CD4-positive, alpha-beta memory T cell (primary cell): ENCODE measurements at regions of chr11 and their contacts with region 1.

Region 1: GRCh38 chr11:64688534-64688982 is 34.4 kb downstream of the NRXN2 start:
- DNase-seq: peak; percentile 83 to 87 (median 86)
- H3K4me3 ChIP-seq: peak overlapping the region in 1 of 2 donors; percentile 26
- H3K4me3 Mint-ChIP-seq: peak overlapping the region; percentile 40 to 80 (median 54)
- H3K27ac ChIP-seq: no peak overlapping the region
- H3K27ac Mint-ChIP-seq: peak overlapping the region in 6 of 7 donors; percentile 49 to 85 (median 69)
- H3K4me1 ChIP-seq: peaks cover 11% of the 10 kb centered on the region
- H3K4me1 Mint-ChIP-seq: peaks cover 7 to 19% (median 13%) of the 10 kb centered on the region in 4 donors
- H3K27me3 ChIP-seq: peaks cover 4% of the 10 kb centered on the region
- H3K27me3 Mint-ChIP-seq: peaks cover 15 to 23% of the 10 kb centered on the region in 2 donors

Region 2: DNA sequence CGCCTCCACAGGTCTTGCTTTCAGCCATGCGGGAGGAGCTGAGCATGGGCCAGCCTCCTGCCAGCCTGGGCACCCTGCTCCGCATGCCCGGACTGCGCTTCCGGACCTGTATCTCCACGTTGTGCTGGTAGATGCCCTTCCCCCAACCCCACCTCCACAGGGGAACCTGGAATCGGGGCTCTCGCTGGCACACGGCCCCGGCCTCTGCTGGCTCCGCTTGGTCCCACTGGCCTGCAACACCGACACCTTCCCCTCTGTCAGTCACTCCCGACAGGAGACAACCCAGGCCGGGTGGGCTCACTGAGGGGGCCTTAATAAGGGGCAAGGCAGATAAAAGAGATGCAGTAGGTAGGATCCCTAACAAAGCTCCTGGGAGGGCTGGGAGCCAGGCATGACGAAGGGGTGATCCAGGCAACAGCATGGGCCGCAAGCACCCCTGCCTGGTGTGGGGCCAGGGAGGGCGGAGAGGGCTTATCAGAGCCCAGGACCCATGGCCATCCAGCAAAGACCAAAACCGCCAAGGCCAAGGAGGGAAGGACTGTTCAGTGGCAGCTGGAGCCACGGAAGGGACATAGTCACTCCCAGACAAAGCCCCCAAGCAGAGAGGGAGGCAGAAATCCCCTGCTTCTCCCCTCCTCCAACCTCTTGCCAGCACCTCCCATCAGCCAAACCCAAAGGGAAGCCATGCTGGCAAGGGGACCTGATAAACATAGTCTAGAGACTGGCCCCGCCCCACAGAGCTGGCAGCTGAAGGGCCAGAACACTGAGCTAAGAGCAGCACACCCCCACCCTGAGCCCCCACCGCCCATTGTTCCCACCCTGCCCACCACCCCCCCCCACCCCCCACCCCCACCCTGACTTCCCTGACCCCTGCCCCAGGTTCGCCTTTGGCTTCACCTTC is 89.5 kb before region 1 on chr11:
- CTCF ChIA-PET with region 1: no interaction called
- POLR2A ChIA-PET with region 1: no interaction called
- intact Hi-C with region 1: no loop called
- DNase-seq: no peak
- H3K4me3 ChIP-seq: no peak overlapping the region
- H3K4me3 Mint-ChIP-seq: no peak overlapping the region
- H3K27ac ChIP-seq: no peak overlapping the region
- H3K27ac Mint-ChIP-seq: no peak overlapping the region
- H3K4me1 ChIP-seq: no peaks in the 10 kb centered on the region
- H3K4me1 Mint-ChIP-seq: no peaks in the 10 kb centered on the region
- H3K27me3 ChIP-seq: no peaks in the 10 kb centered on the region
- H3K27me3 Mint-ChIP-seq: peaks cover 0 to 1% of the 10 kb centered on the region in 2 donors

Region 3: GRCh38 chr11:64703048-64703447 is 14.5 kb after region 1 on chr11:
- CTCF ChIA-PET with region 1: interaction called, 30 read pairs
- POLR2A ChIA-PET with region 1: no interaction called
- intact Hi-C with region 1: no loop called
- DNase-seq: no peak
- H3K4me3 ChIP-seq: no peak overlapping the region
- H3K4me3 Mint-ChIP-seq: no peak overlapping the region
- H3K27ac ChIP-seq: no peak overlapping the region
- H3K27ac Mint-ChIP-seq: peak overlapping the region in 1 of 7 donors; percentile 13
- H3K4me1 ChIP-seq: no peaks in the 10 kb centered on the region
- H3K4me1 Mint-ChIP-seq: peaks cover 0 to 3% (median 0%) of the 10 kb centered on the region in 4 donors
- H3K27me3 ChIP-seq: no peaks in the 10 kb centered on the region
- H3K27me3 Mint-ChIP-seq: peaks cover 8 to 17% of the 10 kb centered on the region in 2 donors

Region 4: DNA sequence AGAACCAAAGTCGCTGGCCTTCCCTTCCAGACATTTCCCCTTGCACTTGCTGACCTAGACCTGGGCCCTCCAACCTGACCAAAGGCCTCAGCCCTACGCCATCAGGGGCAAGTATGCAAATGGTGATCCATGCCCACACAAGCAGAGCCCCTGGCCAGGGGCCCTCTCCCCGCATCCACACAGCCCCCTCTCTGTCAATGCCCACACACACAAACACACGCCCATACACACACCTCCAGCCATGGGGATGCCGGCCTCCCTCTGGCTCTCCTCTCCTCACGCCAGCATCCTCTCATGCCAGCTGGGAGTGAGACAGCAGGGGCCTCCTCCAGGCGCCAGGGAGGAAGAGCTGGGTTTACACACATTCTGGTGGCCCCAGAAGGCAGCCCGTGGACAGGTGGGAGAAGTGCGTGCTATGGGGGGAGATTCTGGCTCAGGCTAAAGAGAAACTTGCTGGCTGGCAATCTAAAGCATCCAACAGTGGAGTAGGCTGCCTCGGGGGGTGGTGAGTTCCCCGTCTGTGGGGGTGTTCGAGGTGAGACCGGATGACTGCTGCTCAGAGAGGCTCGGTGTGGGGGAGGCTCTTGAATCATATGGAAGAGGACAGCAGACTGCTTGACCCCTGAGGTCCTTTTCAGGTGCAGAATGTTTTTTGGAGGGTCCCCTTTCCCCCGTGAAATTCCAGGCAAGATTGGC is 29.7 kb after region 1 on chr11:
- CTCF ChIA-PET with region 1: interaction called, 10 read pairs
- POLR2A ChIA-PET with region 1: no interaction called
- intact Hi-C with region 1: loop called (anchors 1 kb)
- DNase-seq: no peak
- H3K4me3 ChIP-seq: no peak overlapping the region
- H3K4me3 Mint-ChIP-seq: no peak overlapping the region
- H3K27ac ChIP-seq: no peak overlapping the region
- H3K27ac Mint-ChIP-seq: no peak overlapping the region
- H3K4me1 ChIP-seq: no peaks in the 10 kb centered on the region
- H3K4me1 Mint-ChIP-seq: peaks cover 0 to 19% (median 4%) of the 10 kb centered on the region in 4 donors
- H3K27me3 ChIP-seq: peaks cover 34% of the 10 kb centered on the region
- H3K27me3 Mint-ChIP-seq: peaks cover 41 to 55% of the 10 kb centered on the region in 2 donors

Region 5: GRCh38 chr11:64723117-64723906 is 34.8 kb after region 1 on chr11 and contains the start of gene NRXN2:
- CTCF ChIA-PET with region 1: interaction called, 10 read pairs
- POLR2A ChIA-PET with region 1: interaction called, 5 read pairs
- intact Hi-C with region 1: loop called (anchors 1 kb)
- DNase-seq: peak; percentile 82 to 87 (median 84)
- H3K4me3 ChIP-seq: peak within 1 kb of the TSS; percentile 47 to 67
- H3K4me3 Mint-ChIP-seq: peak within 1 kb of the TSS; percentile 57 to 77 (median 69)
- H3K27ac ChIP-seq: peak within 1 kb of the TSS; percentile 82
- H3K27ac Mint-ChIP-seq: peak within 1 kb of the TSS; percentile 15 to 81 (median 63)
- H3K4me1 ChIP-seq: peaks cover 8% of the 10 kb centered on the region
- H3K4me1 Mint-ChIP-seq: peaks cover 11 to 30% (median 15%) of the 10 kb centered on the region in 4 donors
- H3K27me3 ChIP-seq: peaks cover 11% of the 10 kb centered on the region
- H3K27me3 Mint-ChIP-seq: peaks cover 15 to 18% of the 10 kb centered on the region in 2 donors
- total RNA-seq, gene NRXN2: 0.30 TPM in 1 of 2 experiments, not detected in the other

Region 6: DNA sequence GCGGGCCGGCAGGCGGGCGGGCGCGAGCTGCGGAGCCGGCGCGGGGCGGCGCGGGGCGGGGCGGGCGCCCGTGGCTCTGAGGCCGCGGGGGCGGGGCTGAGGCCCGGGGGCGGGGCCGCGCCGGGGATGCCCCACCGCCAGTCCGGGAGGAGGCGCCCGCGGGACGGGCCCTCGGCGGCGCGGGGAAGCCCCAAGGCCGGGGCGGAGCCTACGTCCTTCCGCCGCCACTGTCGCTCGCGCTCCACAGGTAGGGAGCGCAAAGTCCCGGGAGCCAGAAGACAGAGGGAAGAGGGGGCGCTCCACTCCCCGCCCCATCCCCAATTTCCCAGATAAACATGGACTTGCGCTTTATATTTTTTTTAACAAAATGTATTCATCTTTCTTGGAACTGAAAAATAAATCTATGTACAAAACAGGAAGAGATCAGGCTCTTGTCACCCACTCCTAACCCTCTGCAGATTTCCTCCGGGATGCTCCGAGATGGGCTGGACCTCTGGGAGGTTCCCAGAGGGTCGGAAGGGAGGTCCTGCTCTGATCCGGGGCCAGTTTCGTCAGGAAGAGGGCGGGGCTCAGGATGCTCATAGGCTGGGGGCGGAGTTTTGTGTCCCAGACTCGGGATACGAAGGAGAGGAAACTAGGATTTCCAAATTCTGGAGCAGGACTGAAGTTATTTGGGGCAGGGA is 114.7 kb after region 1 on chr11 and contains the start of gene MAP4K2:
- CTCF ChIA-PET with region 1: interaction called, 4 read pairs
- POLR2A ChIA-PET with region 1: no interaction called
- intact Hi-C with region 1: loop called (anchors 2 kb)
- DNase-seq: peak; percentile 84 to 91 (median 89)
- H3K4me3 ChIP-seq: peak within 1 kb of the TSS; percentile 79
- H3K4me3 Mint-ChIP-seq: peak within 1 kb of the TSS; percentile 87 to 92 (median 90)
- H3K27ac ChIP-seq: peak within 1 kb of the TSS; percentile 93
- H3K27ac Mint-ChIP-seq: peak within 1 kb of the TSS; percentile 94 to 97 (median 96)
- H3K4me1 ChIP-seq: peaks cover 35% of the 10 kb centered on the region
- H3K4me1 Mint-ChIP-seq: peaks cover 9 to 48% (median 24%) of the 10 kb centered on the region in 4 donors
- H3K27me3 ChIP-seq: no peaks in the 10 kb centered on the region
- H3K27me3 Mint-ChIP-seq: no peaks in the 10 kb centered on the region
- total RNA-seq, gene MAP4K2: 122 to 128 TPM